ENCODE measurements at regions of chr19 and their contacts with region 1.

Region 1: GRCh38 chr19:51422053-51422448 is 4.6 kb upstream of the SIGLEC10 start:
- DNase-seq: peak; percentile 97
- ATAC-seq: peak; percentile 86
- H3K4me3 Mint-ChIP-seq: peak overlapping the region; percentile 59
- H3K27ac Mint-ChIP-seq: no peak overlapping the region
- H3K4me1 Mint-ChIP-seq: peaks cover 5% of the 10 kb centered on the region; the same call in 1 of the 2 replicates
- H3K27me3 Mint-ChIP-seq: peaks cover 55% of the 10 kb centered on the region
- CTCF ChIP-seq: peak; percentile 100

Region 2: GRCh38 chr19:51226067-51226466 is 196.0 kb before region 1 on chr19:
- CTCF ChIA-PET with region 1: no interaction called
- POLR2A ChIA-PET with region 1: no interaction called
- DNase-seq: no peak
- ATAC-seq: no peak
- H3K4me3 Mint-ChIP-seq: no peak overlapping the region
- H3K27ac Mint-ChIP-seq: no peak overlapping the region
- H3K4me1 Mint-ChIP-seq: no peaks in the 10 kb centered on the region
- H3K27me3 Mint-ChIP-seq: peaks cover 44% of the 10 kb centered on the region
- CTCF ChIP-seq: no peak

Region 3: GRCh38 chr19:51367565-51368365 is 54.3 kb before region 1 on chr19:
- CTCF ChIA-PET with region 1: interaction called, 25 read pairs
- POLR2A ChIA-PET with region 1: interaction called, 5 read pairs
- DNase-seq: peak; percentile 100
- ATAC-seq: peak; percentile 88
- H3K4me3 Mint-ChIP-seq: peak overlapping the region; percentile 99
- H3K27ac Mint-ChIP-seq: no peak overlapping the region
- H3K4me1 Mint-ChIP-seq: peaks cover 30% of the 10 kb centered on the region
- H3K27me3 Mint-ChIP-seq: peaks cover 21% of the 10 kb centered on the region
- CTCF ChIP-seq: no peak

Region 4: DNA sequence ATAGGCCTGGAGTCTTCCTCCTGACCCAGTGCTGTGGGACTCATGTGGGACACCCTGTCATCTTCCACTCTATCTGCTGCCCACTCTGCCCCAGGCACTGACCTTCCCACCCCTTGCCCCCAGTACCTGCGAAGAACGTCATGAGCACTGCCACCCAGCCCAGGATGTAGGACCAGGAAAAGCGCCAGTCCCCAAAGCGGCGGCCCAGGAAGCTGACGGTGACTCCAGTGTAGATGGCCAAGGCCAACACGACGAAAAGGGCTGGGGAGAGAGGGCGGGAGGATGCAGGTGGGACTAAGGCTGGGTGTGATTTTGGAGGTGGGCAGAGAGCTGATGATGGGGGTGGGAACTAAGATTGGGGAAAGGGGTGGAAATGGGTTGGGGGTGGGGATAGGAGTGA is 41.7 kb before region 1 on chr19:
- CTCF ChIA-PET with region 1: no interaction called
- POLR2A ChIA-PET with region 1: no interaction called
- DNase-seq: no peak
- ATAC-seq: no peak
- H3K4me3 Mint-ChIP-seq: no peak overlapping the region
- H3K27ac Mint-ChIP-seq: no peak overlapping the region
- H3K4me1 Mint-ChIP-seq: peaks cover under 1% of the 10 kb centered on the region
- H3K27me3 Mint-ChIP-seq: peaks cover 12% of the 10 kb centered on the region
- CTCF ChIP-seq: no peak

Region 5: GRCh38 chr19:51393959-51394836 is 27.9 kb before region 1 on chr19:
- CTCF ChIA-PET with region 1: interaction called, 41 read pairs
- POLR2A ChIA-PET with region 1: no interaction called
- DNase-seq: peak; percentile 98
- ATAC-seq: peak; percentile 92
- H3K4me3 Mint-ChIP-seq: peak overlapping the region; percentile 94
- H3K27ac Mint-ChIP-seq: peak overlapping the region; percentile 99
- H3K4me1 Mint-ChIP-seq: peaks cover 46% of the 10 kb centered on the region
- H3K27me3 Mint-ChIP-seq: no peaks in the 10 kb centered on the region
- CTCF ChIP-seq: no peak

Region 6: GRCh38 chr19:51399231-51399630 is 22.8 kb before region 1 on chr19:
- CTCF ChIA-PET with region 1: interaction called, 41 read pairs
- POLR2A ChIA-PET with region 1: no interaction called
- DNase-seq: no peak
- ATAC-seq: no peak
- H3K4me3 Mint-ChIP-seq: no peak overlapping the region
- H3K27ac Mint-ChIP-seq: no peak overlapping the region
- H3K4me1 Mint-ChIP-seq: peaks cover 24% of the 10 kb centered on the region
- H3K27me3 Mint-ChIP-seq: peaks cover 15% of the 10 kb centered on the region
- CTCF ChIP-seq: no peak

Region 7: DNA sequence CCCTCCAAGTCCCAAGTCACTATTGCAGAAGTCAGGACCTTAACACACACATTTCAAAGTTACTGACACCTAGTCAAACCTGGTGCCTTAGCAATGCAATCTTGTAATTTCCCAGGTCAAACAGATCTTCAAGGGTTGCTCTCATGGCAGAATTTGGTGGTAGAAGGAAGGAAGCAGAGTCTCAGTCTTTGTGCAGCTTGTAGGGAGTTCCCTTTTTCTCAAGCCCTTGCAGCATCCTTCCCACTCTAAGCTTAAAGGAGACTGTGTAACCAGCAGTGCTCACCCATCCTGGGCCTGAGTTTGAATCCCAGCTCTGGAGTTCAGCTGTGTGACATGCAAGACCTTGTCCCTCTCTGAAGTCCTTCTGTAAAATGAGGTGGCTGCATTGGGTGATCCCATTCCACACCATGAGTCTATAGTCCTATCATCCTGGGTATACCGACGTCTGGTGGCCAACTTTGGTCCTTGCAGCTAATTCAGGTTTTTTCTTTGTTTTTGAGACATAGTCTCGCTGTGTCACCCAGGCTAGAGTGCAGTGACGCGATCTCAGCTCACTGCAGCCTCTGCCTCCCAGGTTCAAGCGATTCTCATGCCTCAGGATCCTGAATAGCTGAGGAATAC is 14.4 kb before region 1 on chr19:
- CTCF ChIA-PET with region 1: interaction called, 51 read pairs
- POLR2A ChIA-PET with region 1: no interaction called
- DNase-seq: peak; percentile 47
- ATAC-seq: peak; percentile 87
- H3K4me3 Mint-ChIP-seq: no peak overlapping the region
- H3K27ac Mint-ChIP-seq: peak overlapping the region; percentile 85
- H3K4me1 Mint-ChIP-seq: peaks cover 32% of the 10 kb centered on the region
- H3K27me3 Mint-ChIP-seq: peaks cover 8% of the 10 kb centered on the region
- CTCF ChIP-seq: 0 out of 2 replicates have a peak, but pooled peaks have one; percentile 27

Region 8: GRCh38 chr19:51433043-51433442 is 11.0 kb after region 1 on chr19:
- CTCF ChIA-PET with region 1: interaction called, 39 read pairs
- POLR2A ChIA-PET with region 1: no interaction called
- DNase-seq: no peak
- ATAC-seq: no peak
- H3K4me3 Mint-ChIP-seq: no peak overlapping the region
- H3K27ac Mint-ChIP-seq: no peak overlapping the region
- H3K4me1 Mint-ChIP-seq: no peaks in the 10 kb centered on the region
- H3K27me3 Mint-ChIP-seq: peaks cover 50% of the 10 kb centered on the region
- CTCF ChIP-seq: no peak

Region 9: GRCh38 chr19:51441410-51442390 is 19.6 kb after region 1 on chr19:
- CTCF ChIA-PET with region 1: interaction called, 39 read pairs
- POLR2A ChIA-PET with region 1: no interaction called
- DNase-seq: no peak
- ATAC-seq: no peak
- H3K4me3 Mint-ChIP-seq: no peak overlapping the region
- H3K27ac Mint-ChIP-seq: no peak overlapping the region
- H3K4me1 Mint-ChIP-seq: peaks cover 6% of the 10 kb centered on the region; the same call in 1 of the 2 replicates
- H3K27me3 Mint-ChIP-seq: peaks cover 39% of the 10 kb centered on the region
- CTCF ChIP-seq: no peak